Breast epithelium (tissue), 4 donors: ENCODE measurements at regions of chr4 and their contacts with region 1.

Region 1: DNA sequence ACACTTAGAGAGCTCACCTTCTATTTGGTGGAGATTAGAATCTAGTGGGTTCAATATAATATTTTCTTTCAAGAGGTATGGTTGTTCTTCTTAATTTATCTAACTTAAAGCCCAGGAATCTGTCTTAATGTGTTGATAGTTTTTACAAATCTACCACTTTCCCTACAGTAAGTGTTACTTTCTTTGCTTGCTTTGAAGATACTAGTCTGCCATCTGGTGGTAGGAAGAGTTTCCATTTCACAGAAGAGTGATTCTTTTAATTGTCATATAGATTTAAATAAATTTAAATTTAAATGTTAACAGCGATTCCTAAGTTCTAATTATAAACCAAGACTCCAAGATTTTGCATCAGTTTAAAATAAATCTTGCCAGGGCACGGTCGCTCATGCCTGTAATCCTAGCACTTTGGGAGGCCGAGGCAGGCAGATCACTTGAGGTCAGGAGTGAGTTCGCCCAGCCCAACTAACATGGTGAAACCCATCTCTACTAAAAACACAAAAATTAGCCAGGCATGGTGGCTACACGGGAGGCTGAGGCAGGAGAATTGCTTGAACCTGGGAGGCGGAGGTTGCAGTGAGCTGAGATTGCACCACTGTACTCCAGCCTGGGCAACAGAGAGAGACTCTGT is 43.5 kb downstream of the NUDT9 start:
- DNase-seq: no peak
- H3K4me3 ChIP-seq: no peak overlapping the region
- H3K27ac ChIP-seq: no peak overlapping the region
- H3K4me1 ChIP-seq: no peaks in the 10 kb centered on the region
- H3K27me3 ChIP-seq: no peaks in the 10 kb centered on the region
- CTCF ChIP-seq: peak; percentile 13 to 68 (median 67)
- POLR2A ChIP-seq: no peak

Region 2: GRCh38 chr4:86508436-86508835 is 957.4 kb before region 1 on chr4:
- intact Hi-C with region 1: no loop called
- DNase-seq: no peak
- H3K4me3 ChIP-seq: peak overlapping the region in 1 of 3 donors; percentile 4
- H3K27ac ChIP-seq: no peak overlapping the region
- H3K4me1 ChIP-seq: no peaks in the 10 kb centered on the region
- H3K27me3 ChIP-seq: no peaks in the 10 kb centered on the region
- CTCF ChIP-seq: no peak
- POLR2A ChIP-seq: no peak

Region 3: DNA sequence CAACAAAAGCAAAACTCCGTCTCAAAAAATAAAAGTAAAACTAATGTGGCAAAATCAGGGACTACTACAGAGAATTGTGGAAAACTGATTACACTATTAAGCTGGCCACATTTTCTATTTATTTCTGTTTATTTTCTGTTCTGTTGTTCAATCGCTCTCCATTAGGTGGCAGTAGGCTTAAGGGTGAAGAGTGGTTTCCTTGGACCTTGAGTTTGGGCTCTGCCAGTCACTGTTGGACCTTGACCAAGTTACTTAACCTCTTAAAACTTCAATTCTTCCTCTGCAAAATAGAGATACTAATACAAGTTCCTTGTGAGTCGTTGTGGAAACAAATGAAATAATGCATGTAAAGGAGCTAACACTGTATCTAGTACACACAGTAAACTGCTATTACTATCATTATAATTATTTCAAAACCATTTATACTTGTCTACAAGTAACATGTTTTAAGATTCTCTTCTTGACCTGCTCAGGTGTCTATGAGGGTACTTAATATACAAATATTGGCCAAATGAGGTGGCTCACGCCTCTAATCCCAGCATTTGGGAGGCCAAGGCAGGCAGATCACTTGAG is 90.0 kb before region 1 on chr4:
- intact Hi-C with region 1: loop called (anchors 10 kb)
- DNase-seq: no peak
- H3K4me3 ChIP-seq: no peak overlapping the region
- H3K27ac ChIP-seq: peak overlapping the region in 1 of 2 donors; percentile 12
- H3K4me1 ChIP-seq: no peaks in the 10 kb centered on the region
- H3K27me3 ChIP-seq: no peaks in the 10 kb centered on the region
- CTCF ChIP-seq: peak; percentile 10 to 64 (median 62)
- POLR2A ChIP-seq: no peak

Region 4: GRCh38 chr4:88119951-88120350 is 654.1 kb after region 1 on chr4:
- intact Hi-C with region 1: no loop called
- DNase-seq: no peak
- H3K4me3 ChIP-seq: no peak overlapping the region
- H3K27ac ChIP-seq: no peak overlapping the region
- H3K4me1 ChIP-seq: no peaks in the 10 kb centered on the region
- H3K27me3 ChIP-seq: no peaks in the 10 kb centered on the region
- CTCF ChIP-seq: no peak
- POLR2A ChIP-seq: no peak